ENCODE measurements at regions of chr2 and their contacts with region 1.

Region 1: DNA sequence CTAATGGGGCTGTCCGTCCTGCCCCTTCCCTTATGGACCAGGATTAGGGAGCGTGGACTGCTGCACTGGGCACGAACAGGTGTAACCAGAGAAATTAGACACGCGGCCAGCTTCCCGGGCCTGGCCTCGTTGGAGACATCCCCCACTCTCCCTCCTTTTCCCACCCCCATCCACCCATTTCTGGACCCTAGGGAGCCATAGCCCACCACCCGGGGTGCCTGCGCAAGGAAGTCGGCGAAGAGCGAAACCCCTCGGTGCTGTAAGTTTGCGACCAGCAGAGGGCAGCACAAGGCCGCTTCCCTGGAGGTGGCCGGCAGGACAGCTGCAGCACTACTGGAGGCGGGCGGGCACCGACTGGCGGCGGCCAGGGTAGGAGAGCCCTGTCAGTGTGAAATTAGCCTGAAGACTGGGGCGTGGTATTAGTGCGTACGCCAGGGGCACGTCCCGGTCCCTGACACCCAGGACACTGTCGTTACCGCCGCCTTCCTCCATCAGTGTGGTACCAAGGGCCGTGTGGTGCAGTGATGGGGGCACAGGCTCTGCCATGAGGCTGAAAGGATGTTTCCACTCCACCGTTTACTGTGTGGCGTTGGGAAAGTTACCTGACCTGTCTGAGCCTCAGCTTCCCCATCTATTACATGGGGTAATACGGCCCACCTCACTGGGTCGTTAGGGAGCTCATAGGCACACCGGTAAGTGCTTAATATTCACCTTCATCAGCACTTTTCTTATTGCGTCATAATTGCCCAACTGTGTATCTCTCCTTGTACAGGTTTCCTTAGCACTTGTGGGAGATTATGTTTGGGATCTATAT is 36.0 kb upstream of the CD207 start:
- DNase-seq: peak; percentile 90
- H3K4me3 ChIP-seq: peak overlapping the region; percentile 19 to 57; a peak in 2 of 4 replicates
- H3K27ac ChIP-seq: no peak overlapping the region
- H3K4me1 ChIP-seq: peaks cover 0 to 10% of the 10 kb centered on the region in 2 experiments; a peak in 1 of 4 replicates
- H3K27me3 ChIP-seq: no peaks in the 10 kb centered on the region
- CTCF ChIP-seq: peak; percentile 88
- EP300 ChIP-seq: no peak
- RAD21 ChIP-seq: peak; percentile 95

Region 2: DNA sequence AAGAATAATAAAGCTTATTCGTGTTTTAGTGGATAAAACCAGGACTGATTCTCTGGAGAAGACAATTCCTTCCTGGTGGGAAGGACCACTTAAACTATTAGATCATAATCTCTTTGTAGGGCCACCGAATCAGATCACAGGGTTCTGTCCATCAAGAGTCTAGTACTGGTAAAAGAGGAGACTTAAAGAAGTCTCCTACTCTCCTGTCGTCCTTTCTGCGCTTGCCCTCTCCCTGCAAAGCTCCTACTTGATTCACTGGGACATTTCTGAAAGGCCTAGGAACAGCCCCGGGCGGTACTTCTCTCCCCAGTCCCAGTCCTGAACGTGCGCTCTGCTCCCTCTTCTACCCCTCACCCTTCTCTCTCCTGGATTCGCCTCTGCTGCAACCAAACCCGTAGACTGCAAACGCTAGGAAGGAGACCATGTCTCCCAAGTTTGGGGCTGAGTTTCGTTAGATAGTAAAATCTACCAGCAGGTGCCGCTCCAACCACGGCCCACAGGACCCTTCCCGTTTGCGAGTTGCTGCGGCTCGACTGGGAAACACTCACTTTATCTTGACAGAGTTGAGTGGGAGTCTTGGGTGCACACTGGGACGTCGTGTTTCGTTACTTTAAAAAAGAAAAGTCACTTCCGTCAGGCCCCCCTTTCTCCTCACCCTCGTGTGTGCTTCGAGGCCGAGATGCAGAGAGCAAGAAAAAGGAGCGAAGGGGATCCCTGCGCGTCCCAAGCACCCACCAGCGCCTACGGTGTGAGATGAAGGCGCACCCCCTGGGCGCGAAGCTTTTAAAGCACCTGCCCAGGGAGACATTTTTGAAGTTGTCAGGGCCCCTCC is 82.1 kb before region 1 on chr2:
- CTCF ChIA-PET with region 1: interaction called, 27 read pairs
- POLR2A ChIA-PET with region 1: no interaction called
- DNase-seq: peak; percentile 81
- H3K4me3 ChIP-seq: peak overlapping the region; percentile 26 to 55
- H3K27ac ChIP-seq: no peak overlapping the region
- H3K4me1 ChIP-seq: peaks cover 0 to 9% of the 10 kb centered on the region in 2 experiments; a peak in 1 of 4 replicates
- H3K27me3 ChIP-seq: peaks cover 44% of the 10 kb centered on the region
- CTCF ChIP-seq: peak; percentile 69
- EP300 ChIP-seq: no peak
- RAD21 ChIP-seq: peak; percentile 83

Region 3: DNA sequence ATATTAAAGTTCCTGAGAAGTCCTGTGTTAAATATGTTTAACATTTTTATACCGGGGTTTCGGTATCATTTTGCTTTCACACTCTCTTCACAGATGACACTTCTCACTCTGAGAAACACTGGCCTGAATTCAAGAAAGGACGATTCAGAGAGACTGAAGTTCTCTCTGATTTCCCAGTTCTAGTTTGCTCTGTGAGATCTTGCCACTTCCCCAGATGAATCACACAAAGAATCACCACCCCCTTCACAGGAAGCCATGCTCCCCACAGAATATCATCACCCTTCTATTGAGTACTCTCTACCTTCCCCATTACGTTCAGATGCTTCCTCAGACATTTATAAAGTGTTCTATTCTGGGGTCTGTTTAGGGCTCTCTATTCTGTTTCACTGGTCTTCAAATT is 19.9 kb before region 1 on chr2:
- CTCF ChIA-PET with region 1: interaction called, 24 read pairs
- POLR2A ChIA-PET with region 1: no interaction called
- DNase-seq: no peak
- H3K4me3 ChIP-seq: no peak overlapping the region
- H3K27ac ChIP-seq: no peak overlapping the region
- H3K4me1 ChIP-seq: no peaks in the 10 kb centered on the region
- H3K27me3 ChIP-seq: no peaks in the 10 kb centered on the region; the same call in 1 of the 2 replicates
- CTCF ChIP-seq: no peak
- EP300 ChIP-seq: no peak
- RAD21 ChIP-seq: no peak

Region 4: GRCh38 chr2:70897203-70897976 is 25.8 kb after region 1 on chr2:
- CTCF ChIA-PET with region 1: interaction called, 17 read pairs
- POLR2A ChIA-PET with region 1: interaction called, 3 read pairs
- DNase-seq: no peak
- H3K4me3 ChIP-seq: no peak overlapping the region
- H3K27ac ChIP-seq: no peak overlapping the region
- H3K4me1 ChIP-seq: peaks cover 0 to 13% of the 10 kb centered on the region in 2 experiments; a peak in 2 of 4 replicates
- H3K27me3 ChIP-seq: no peaks in the 10 kb centered on the region
- CTCF ChIP-seq: no peak
- EP300 ChIP-seq: no peak
- RAD21 ChIP-seq: no peak

Region 5: DNA sequence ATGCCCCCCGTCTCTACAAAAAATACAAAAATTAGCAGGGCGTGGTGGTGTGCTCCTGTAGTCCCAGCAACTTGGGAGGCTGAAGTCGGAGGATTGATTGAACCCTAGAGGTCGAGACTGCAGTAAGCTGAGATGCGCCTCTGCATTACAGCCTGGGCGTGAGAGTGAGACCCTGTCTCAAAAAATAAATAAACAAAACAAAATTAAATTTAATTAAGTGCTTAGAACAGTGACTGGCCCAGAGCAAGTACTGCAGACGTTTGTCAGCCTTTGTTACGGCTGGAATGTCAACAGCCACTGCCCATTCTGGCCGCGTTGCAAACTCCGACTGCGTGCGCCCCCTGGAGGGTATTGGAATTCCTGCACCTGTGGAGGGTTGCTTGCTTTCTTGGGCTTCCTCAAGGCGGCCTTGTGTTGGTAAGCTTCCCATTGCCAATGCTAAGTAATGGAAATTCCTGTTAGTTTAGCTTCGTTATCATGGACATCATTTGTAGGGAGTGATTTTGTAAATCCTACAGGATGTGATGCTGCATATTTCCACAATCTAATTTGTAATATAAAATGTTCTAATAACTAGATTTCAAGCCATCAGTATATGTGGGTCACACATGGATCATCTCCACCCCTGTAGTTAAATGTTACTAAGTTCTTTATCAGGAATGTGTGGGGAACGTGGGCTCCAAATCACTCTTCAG is 48.2 kb after region 1 on chr2:
- CTCF ChIA-PET with region 1: interaction called, 211 read pairs
- POLR2A ChIA-PET with region 1: no interaction called
- DNase-seq: peak; percentile 83
- H3K4me3 ChIP-seq: no peak overlapping the region; a peak in 1 of 4 replicates
- H3K27ac ChIP-seq: no peak overlapping the region
- H3K4me1 ChIP-seq: no peaks in the 10 kb centered on the region
- H3K27me3 ChIP-seq: no peaks in the 10 kb centered on the region
- CTCF ChIP-seq: peak; percentile 93
- EP300 ChIP-seq: no peak
- RAD21 ChIP-seq: peak; percentile 82

Region 6: GRCh38 chr2:70964596-70965386 is 93.2 kb after region 1 on chr2:
- CTCF ChIA-PET with region 1: interaction called, 33 read pairs
- POLR2A ChIA-PET with region 1: no interaction called
- DNase-seq: peak; percentile 84
- H3K4me3 ChIP-seq: peak overlapping the region; percentile 39 to 58
- H3K27ac ChIP-seq: no peak overlapping the region
- H3K4me1 ChIP-seq: no peaks in the 10 kb centered on the region; a peak in 1 of 4 replicates
- H3K27me3 ChIP-seq: no peaks in the 10 kb centered on the region
- CTCF ChIP-seq: peak; percentile 64
- EP300 ChIP-seq: no peak
- RAD21 ChIP-seq: peak; percentile 62

Measured in SK-N-SH (cell line).